Left ventricle myocardium inferior (tissue), 1 donor: ENCODE measurements at regions of chr2 and their contacts with region 1.

Region 1: DNA sequence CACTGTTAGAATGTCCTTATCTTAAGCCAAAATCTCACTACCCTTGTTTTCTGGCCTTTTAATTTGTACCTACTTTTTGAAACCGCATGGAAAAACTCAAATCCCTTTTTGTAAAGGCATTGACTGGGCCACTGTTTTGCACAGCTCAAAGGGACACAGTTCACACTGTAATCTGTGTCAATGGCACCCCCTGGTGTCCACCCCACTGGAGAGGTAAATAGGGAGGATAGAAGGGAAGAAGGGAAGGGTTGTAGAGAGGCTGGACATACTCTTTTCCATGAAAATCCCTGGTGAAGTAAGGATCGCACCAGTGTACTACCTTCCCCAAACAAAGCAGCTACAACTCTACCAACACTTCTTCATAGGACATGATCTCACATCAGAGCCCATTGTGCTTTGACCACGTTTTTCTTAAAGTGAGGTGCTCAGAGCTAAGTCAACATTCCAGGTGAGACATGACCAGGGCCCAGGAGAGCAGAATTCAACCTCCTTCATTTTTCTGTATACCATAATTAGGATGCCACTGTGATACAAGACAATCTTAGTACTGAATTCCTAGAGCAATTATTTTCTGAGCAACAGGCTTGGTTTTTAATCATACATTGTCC is 92.4 kb upstream of the RMDN2 start:
- DNase-seq: peak; percentile 85
- H3K4me3 ChIP-seq: no peak overlapping the region
- H3K27ac ChIP-seq: peak overlapping the region; percentile 71
- H3K4me1 ChIP-seq: peaks cover 50% of the 10 kb centered on the region
- H3K27me3 ChIP-seq: no peaks in the 10 kb centered on the region
- CTCF ChIP-seq: peak; percentile 85

Region 2: DNA sequence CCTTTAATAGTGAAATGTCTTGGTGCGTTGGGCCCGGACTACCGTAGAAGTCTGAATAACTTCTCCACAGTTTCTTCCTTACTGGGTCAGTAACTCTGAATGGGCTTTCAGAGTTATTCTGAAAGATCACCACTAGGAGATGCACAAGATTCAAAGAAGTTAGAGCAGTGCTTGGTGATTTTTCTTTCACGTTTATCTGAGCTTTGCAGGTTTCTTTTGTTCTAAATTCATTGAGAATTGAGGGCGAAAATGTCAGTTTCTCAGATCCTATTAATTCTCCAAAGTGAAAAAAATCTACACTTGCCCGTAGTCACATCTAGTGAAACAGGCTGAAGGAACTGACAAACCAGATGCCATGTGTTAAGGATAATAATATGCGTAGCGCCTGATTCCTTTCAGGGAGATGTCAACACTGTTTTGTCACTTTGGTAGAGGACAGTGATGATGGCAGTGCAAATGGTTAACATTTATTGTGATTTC is 418.2 kb before region 1 on chr2:
- intact Hi-C with region 1: loop called (anchors 5 kb)
- DNase-seq: no peak
- H3K4me3 ChIP-seq: peak overlapping the region; percentile 24
- H3K27ac ChIP-seq: peak overlapping the region; percentile 50
- H3K4me1 ChIP-seq: peaks cover 10% of the 10 kb centered on the region
- H3K27me3 ChIP-seq: no peaks in the 10 kb centered on the region
- CTCF ChIP-seq: peak; percentile 84